ENCODE measurements at regions of chr2 and their contacts with region 1.

Region 1: GRCh38 chr2:118003396-118003824 is 10.5 kb downstream of the CCDC93 start:
- DNase-seq: peak; percentile 51 to 91
- H3K4me3 ChIP-seq: no peak overlapping the region
- H3K27ac ChIP-seq: no peak overlapping the region
- H3K4me1 ChIP-seq: peaks cover 0 to 10% (median 2%) of the 10 kb centered on the region in 4 donors
- H3K27me3 ChIP-seq: no peaks in the 10 kb centered on the region
- CTCF ChIP-seq: peak in 5 of 7 experiments; percentile 30 to 84 (median 78)
- EP300 ChIP-seq: no peak
- POLR2A ChIP-seq: no peak

Region 2: DNA sequence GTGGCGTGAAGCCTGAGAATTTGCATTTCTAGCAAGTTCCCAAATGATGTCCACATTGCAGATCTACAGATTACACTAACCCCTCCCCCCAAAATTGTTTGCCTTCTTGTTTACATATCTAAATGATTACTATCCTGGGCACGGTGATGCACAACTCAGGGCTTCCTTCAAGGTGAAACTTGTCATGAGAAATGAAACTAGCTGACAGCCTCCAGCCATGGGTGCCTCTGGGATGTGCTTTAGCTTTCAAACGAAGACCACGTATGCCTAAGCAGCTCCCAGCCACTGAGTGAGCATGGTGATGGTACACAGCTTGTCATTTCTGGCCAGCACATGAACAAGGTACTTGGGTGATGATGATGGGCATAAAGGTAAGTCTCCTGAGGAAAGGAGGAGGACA is 653.7 kb before region 1 on chr2:
- intact Hi-C with region 1: no loop called
- DNase-seq: no peak
- H3K4me3 ChIP-seq: no peak overlapping the region
- H3K27ac ChIP-seq: no peak overlapping the region
- H3K4me1 ChIP-seq: no peaks in the 10 kb centered on the region
- H3K27me3 ChIP-seq: no peaks in the 10 kb centered on the region
- CTCF ChIP-seq: no peak
- EP300 ChIP-seq: no peak
- POLR2A ChIP-seq: no peak

Region 3: GRCh38 chr2:117378653-117379052 is 624.8 kb before region 1 on chr2:
- intact Hi-C with region 1: no loop called
- DNase-seq: no peak
- H3K4me3 ChIP-seq: no peak overlapping the region
- H3K27ac ChIP-seq: no peak overlapping the region
- H3K4me1 ChIP-seq: no peaks in the 10 kb centered on the region
- H3K27me3 ChIP-seq: no peaks in the 10 kb centered on the region
- CTCF ChIP-seq: no peak
- EP300 ChIP-seq: no peak
- POLR2A ChIP-seq: no peak

Region 4: DNA sequence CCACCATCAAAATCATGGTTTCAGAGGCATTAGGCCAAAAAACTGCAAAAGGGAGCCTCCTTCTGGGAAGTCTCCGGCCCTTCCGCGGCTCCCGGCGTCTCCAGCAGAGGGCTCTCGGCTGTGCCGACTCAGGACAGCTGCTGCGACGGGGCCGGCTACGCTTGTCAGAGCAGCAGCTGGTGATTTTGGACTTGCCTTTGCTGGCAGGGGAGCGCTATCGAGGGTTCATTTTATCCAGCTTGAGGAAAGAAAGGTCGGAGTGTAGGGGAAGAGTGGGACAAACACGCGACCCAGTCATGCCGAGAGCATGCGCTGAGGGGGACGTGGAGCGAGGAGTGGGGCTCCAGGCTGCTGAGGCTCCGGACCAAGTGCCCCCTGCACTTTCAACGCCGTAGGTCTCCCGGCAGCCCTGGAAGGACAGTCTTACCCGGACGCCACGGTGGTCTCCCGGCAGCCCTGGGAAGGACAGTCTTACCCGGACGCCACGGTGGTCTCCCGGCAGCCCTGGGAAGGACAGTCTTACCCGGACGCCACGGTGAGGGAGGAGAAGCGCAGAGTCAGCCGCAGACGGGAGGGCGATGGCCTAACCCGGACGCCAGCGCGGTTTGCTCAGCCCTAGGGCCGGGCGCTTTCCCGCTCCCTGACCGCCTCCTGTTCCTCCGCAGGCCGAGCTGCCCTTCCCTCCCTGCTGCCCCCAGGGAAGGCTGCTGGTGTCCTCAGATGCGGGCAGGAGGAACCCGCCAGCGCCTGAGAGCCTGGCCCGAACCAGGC is 167.2 kb before region 1 on chr2:
- intact Hi-C with region 1: loop called (anchors 5 kb)
- DNase-seq: peak; percentile 76 to 92
- H3K4me3 ChIP-seq: peak overlapping the region; percentile 46 to 49 (median 48)
- H3K27ac ChIP-seq: peak overlapping the region in 4 of 5 donors; percentile 23 to 75 (median 55)
- H3K4me1 ChIP-seq: peaks cover 9 to 18% (median 14%) of the 10 kb centered on the region in 4 donors
- H3K27me3 ChIP-seq: peaks cover 0 to 7% (median 0%) of the 10 kb centered on the region in 3 donors
- CTCF ChIP-seq: peak in 5 of 7 experiments; percentile 41 to 75 (median 74)
- EP300 ChIP-seq: no peak
- POLR2A ChIP-seq: no peak

Measured in stomach (tissue), 19 donors.